H1 (cell line): ENCODE measurements at regions of chr6 and their contacts with region 1.

Region 1: DNA sequence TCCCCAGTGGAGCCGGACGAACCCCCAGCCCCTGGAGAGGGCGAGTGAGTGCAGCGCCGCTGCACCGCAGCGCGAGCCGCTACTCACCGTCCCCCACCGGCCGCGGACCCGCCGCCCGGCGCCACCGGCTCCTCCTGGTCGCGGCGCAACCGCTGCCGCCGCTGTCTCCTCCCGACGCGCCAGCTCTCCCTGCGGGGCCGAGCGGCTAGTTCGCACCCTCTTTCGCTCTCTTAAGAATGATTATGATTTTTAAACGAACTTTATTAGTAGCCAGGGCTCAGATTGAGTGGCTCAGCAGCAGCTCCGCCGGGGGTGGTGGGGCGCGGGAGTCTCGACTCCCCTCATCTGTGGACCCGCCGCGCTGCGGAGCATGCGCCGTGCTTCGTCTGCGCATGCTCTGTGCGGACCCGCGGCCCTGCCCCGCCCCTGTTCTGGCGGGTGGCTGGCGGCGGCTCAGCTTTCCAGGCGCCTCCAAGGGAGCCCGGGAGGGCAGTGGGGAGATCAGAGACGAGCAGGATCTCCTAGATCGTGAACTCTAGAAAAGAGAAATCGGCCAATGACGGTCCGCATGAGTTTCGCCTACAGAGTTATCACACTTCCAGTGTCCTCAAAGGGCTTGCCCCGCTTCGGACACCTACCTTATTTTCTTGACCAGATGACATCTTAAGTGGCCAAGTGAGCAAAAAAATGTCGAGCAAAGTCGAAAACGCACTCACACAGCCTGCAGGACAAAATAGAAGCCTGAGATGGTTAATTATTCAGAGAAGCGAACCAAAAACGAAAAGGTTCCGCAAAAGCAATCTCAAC is at the start of gene RAB23:
- DNase-seq: peak; percentile 54 to 96
- H3K4me3 ChIP-seq: peak within 1 kb of the TSS; percentile 81 to 93 (median 90)
- H3K27ac ChIP-seq: peak within 1 kb of the TSS; percentile 80
- H3K4me1 ChIP-seq: peaks cover 0 to 3% (median under 1%) of the 10 kb centered on the region in 4 experiments; a peak in 2 of 7 replicates
- H3K27me3 ChIP-seq: no peaks in the 10 kb centered on the region
- CTCF ChIP-seq: no peak
- EP300 ChIP-seq: no peak
- POLR2A ChIP-seq: peak; percentile 64 to 70
- RAD21 ChIP-seq: no peak
- total RNA-seq, gene RAB23: 17.2 and 17.5 TPM in 2 replicates

Region 2: DNA sequence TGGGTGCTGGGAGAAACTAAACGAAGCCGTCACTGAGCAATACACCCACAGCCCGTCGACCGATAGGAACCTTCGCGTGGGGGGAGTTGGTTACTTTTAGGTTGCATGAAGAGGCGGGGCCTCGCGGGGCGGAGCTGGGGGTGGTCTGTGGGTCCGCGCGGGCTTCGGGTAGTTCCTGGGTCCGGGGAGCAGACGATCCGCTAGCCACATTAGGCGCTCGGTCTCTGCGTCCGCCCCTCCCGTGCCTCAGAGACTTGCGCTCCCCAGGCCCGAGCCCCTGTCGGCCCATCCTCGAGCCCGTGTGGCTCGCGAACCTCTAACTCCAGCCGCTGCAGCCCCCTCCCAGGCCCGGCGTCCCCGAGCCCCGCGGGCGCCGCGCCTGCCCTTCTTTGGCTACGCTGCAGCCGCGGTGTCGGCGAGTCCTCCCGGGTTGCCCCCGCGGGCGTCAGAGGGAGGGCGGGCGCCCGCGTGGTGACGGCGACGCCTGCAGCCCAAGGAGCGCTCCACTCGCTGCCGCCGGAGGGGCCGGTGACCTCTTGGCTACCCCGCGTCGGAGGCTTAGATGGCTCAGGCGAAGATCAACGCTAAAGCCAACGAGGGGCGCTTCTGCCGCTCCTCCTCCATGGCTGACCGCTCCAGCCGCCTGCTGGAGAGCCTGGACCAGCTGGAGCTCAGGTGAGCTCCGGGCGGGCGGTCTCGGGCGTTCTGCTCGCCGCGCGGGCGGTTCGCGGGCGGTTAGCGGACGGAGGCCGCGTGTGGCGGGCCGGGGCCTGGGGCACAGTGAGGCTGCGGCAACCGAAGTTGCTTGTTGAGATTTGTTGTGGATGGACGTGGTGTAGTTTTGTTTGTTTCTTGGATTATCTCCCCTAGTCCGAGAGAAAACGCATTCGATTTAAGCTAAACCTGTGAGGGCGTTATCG is 49.7 kb before region 1 on chr6 and contains the start of gene BAG2:
- CTCF ChIA-PET with region 1: no interaction called
- POLR2A ChIA-PET with region 1: interaction called, 13 read pairs
- DNase-seq: peak; percentile 54 to 88
- H3K4me3 ChIP-seq: peak within 1 kb of the TSS; percentile 57 to 66 (median 62)
- H3K27ac ChIP-seq: peak within 1 kb of the TSS; percentile 62; the same call in 1 of the 2 replicates
- H3K4me1 ChIP-seq: peaks cover 2 to 17% (median 5%) of the 10 kb centered on the region in 4 experiments; a peak in 5 of 7 replicates
- H3K27me3 ChIP-seq: peaks cover 0 to 5% (median 2%) of the 10 kb centered on the region in 4 experiments; a peak in 3 of 7 replicates
- CTCF ChIP-seq: peak in 1 of 3 experiments; percentile 11; a peak in 1 of 4 replicates
- EP300 ChIP-seq: peak in 1 of 2 experiments; percentile 97; a peak in 2 of 3 replicates
- POLR2A ChIP-seq: peak in 1 of 2 experiments; percentile 76
- RAD21 ChIP-seq: peak in 1 of 2 experiments; percentile 19; a peak in 1 of 4 replicates
- total RNA-seq, gene BAG2: 7.2 and 7.4 TPM in 2 replicates

Region 3: GRCh38 chr6:57183336-57183735 is 38.8 kb before region 1 on chr6:
- CTCF ChIA-PET with region 1: no interaction called
- POLR2A ChIA-PET with region 1: no interaction called
- DNase-seq: no peak
- H3K4me3 ChIP-seq: no peak overlapping the region
- H3K27ac ChIP-seq: no peak overlapping the region
- H3K4me1 ChIP-seq: no peaks in the 10 kb centered on the region
- H3K27me3 ChIP-seq: no peaks in the 10 kb centered on the region
- CTCF ChIP-seq: no peak
- EP300 ChIP-seq: no peak
- POLR2A ChIP-seq: no peak
- RAD21 ChIP-seq: no peak

Region 4: GRCh38 chr6:57283911-57284455 is 61.8 kb after region 1 on chr6:
- CTCF ChIA-PET with region 1: no interaction called
- POLR2A ChIA-PET with region 1: no interaction called
- DNase-seq: no peak
- H3K4me3 ChIP-seq: no peak overlapping the region
- H3K27ac ChIP-seq: no peak overlapping the region
- H3K4me1 ChIP-seq: peaks cover 0 to 5% (median 1%) of the 10 kb centered on the region in 4 experiments; a peak in 3 of 7 replicates
- H3K27me3 ChIP-seq: no peaks in the 10 kb centered on the region
- CTCF ChIP-seq: no peak
- EP300 ChIP-seq: no peak
- POLR2A ChIP-seq: no peak
- RAD21 ChIP-seq: no peak